Spleen (tissue), 13 donors: ENCODE measurements at regions of chr12 and their contacts with region 1.

Region 1: DNA sequence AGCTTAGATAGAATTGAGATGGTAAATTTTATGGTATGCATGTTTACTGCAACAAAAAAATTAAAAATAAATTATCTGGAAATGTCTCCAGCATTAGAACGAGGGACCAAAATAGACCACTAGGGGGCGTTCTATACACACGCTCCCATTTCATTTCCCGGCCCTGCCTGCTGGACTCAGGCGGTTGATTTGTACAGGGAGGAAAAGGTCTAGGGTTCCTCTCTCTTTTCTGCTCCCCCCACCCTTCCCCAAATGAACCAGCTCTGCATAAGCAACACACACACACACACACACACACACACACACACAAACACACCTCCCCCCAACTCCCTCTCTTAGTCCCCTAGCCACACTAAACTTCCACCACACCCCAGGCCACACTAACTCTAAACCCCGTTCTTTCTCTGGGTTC is 7.8 kb upstream of the DTX1 start:
- DNase-seq: no peak
- H3K4me3 ChIP-seq: no peak overlapping the region
- H3K27ac ChIP-seq: peak overlapping the region in 1 of 8 donors; percentile 6
- H3K4me1 ChIP-seq: peaks cover 15 to 54% (median 39%) of the 10 kb centered on the region in 6 donors
- H3K27me3 ChIP-seq: no peaks in the 10 kb centered on the region
- CTCF ChIP-seq: peak; percentile 66 to 89 (median 81)
- POLR2A ChIP-seq: no peak

Region 2: GRCh38 chr12:113098446-113098896 is 49.7 kb after region 1 on chr12:
- intact Hi-C with region 1: loop called (anchors 2 kb)
- DNase-seq: peak; percentile 89
- H3K4me3 ChIP-seq: no peak overlapping the region
- H3K27ac ChIP-seq: peak overlapping the region in 3 of 8 donors; percentile 21 to 39 (median 31)
- H3K4me1 ChIP-seq: peaks cover 5 to 58% (median 20%) of the 10 kb centered on the region in 6 donors
- H3K27me3 ChIP-seq: peaks cover 0 to 7% (median 0%) of the 10 kb centered on the region in 7 donors
- CTCF ChIP-seq: peak; percentile 80 to 96 (median 90)
- POLR2A ChIP-seq: no peak

Region 3: GRCh38 chr12:113159937-113160336 is 111.2 kb after region 1 on chr12:
- intact Hi-C with region 1: loop called (anchors 5 kb)
- DNase-seq: no peak
- H3K4me3 ChIP-seq: no peak overlapping the region
- H3K27ac ChIP-seq: no peak overlapping the region
- H3K4me1 ChIP-seq: peaks cover 0 to 15% (median 4%) of the 10 kb centered on the region in 6 donors
- H3K27me3 ChIP-seq: peaks cover 0 to 16% (median 6%) of the 10 kb centered on the region in 7 donors
- CTCF ChIP-seq: no peak
- POLR2A ChIP-seq: no peak

Region 4: GRCh38 chr12:113174461-113175384 is 126.0 kb after region 1 on chr12:
- intact Hi-C with region 1: loop called (anchors 5 kb)
- DNase-seq: peak; percentile 92
- H3K4me3 ChIP-seq: no peak overlapping the region
- H3K27ac ChIP-seq: peak overlapping the region in 1 of 8 donors; percentile 37
- H3K4me1 ChIP-seq: peaks cover 0 to 30% (median 20%) of the 10 kb centered on the region in 6 donors
- H3K27me3 ChIP-seq: no peaks in the 10 kb centered on the region
- CTCF ChIP-seq: peak; percentile 95 to 99 (median 98)
- POLR2A ChIP-seq: no peak

Region 5: DNA sequence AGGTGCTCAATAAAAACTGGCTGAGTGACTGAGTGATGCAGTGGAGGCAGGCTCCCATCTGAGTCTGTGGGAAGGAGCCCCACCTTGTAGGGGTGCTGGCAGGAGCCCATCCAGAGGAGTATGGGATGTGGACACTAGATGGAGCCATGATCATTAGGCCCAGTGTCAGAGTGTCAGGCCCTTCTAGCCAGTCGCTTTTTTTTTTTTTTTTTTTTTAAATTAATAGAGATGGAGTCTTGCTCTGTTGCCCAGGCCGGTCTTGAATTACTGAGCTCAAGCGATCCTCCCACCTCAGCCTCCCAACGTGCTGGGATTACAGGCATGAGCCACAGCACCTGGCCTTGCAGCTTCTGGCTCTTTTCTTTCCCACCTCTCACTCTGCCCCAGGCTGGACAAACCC is 148.3 kb after region 1 on chr12:
- intact Hi-C with region 1: no loop called
- DNase-seq: no peak
- H3K4me3 ChIP-seq: no peak overlapping the region
- H3K27ac ChIP-seq: no peak overlapping the region
- H3K4me1 ChIP-seq: peaks cover 5 to 57% (median 14%) of the 10 kb centered on the region in 6 donors
- H3K27me3 ChIP-seq: no peaks in the 10 kb centered on the region
- CTCF ChIP-seq: peak; percentile 54 to 87 (median 75)
- POLR2A ChIP-seq: no peak

Region 6: DNA sequence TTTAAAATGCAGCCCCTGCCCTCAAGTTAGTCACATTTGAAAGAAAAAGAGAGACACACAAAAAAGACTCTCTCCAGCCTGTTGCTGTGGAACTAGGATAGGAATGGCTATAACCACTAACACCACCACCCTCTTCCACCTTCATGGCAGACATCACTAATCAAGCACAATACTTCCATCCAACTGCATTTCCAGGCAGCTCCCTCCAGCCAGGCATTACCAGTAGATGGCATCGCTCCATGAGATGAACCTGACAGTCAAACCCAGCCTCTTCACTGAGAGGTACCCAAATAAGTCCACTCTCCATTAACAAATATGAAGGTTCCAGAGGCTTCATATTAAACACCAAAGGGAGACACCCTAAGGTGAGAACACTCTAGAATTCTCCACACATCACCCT is 261.8 kb after region 1 on chr12:
- intact Hi-C with region 1: no loop called
- DNase-seq: no peak
- H3K4me3 ChIP-seq: no peak overlapping the region
- H3K27ac ChIP-seq: no peak overlapping the region
- H3K4me1 ChIP-seq: no peaks in the 10 kb centered on the region
- H3K27me3 ChIP-seq: no peaks in the 10 kb centered on the region
- CTCF ChIP-seq: no peak
- POLR2A ChIP-seq: no peak